ENCODE measurements at regions of chr17 and their contacts with region 1.

Region 1: GRCh38 chr17:57939797-57940196 is 15.4 kb downstream of the CUEDC1 start:
- DNase-seq: no peak
- H3K4me3 ChIP-seq: no peak overlapping the region
- H3K27ac ChIP-seq: no peak overlapping the region
- H3K4me1 ChIP-seq: peaks cover 99% of the 10 kb centered on the region
- H3K27me3 ChIP-seq: no peaks in the 10 kb centered on the region
- CTCF ChIP-seq: no peak
- POLR2A ChIP-seq: no peak

Region 2: DNA sequence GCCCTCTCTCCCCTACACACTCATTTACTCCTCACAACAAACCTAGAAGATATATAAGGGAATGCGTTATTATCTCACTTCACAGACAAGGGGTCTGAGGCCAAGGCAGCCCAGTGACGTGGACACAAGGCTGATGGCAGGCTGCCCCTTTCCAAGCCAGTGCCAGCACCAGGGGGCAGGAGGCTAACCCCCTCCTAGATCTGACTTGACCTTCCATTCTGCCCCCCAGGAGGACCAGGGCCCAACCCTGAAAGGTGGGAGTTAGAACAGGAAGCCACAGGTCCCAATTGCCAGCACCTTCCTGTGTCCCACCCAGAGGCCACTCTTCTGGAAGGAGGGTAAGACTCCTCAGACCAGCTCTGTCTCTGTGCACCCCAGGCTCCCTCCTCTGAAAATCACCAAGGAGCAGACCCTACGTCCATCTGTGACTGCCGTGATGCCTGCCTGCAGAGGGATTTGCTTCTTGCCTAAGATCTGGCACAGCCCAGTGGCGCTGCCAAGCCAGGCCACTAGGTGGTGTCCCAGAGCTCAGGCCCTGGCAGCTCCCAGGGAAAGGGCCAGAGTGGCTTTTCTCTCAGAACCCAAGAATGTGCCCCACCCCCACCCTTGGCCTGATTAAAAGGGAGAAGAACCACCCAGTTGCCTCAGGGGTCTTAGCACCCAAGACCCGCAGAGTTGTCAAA is 47.5 kb before region 1 on chr17:
- intact Hi-C with region 1: loop called (anchors 5 kb)
- DNase-seq: no peak
- H3K4me3 ChIP-seq: no peak overlapping the region
- H3K27ac ChIP-seq: peak overlapping the region; percentile 93
- H3K4me1 ChIP-seq: peaks cover 81% of the 10 kb centered on the region
- H3K27me3 ChIP-seq: no peaks in the 10 kb centered on the region
- CTCF ChIP-seq: peak; percentile 82 to 96 (median 86)
- POLR2A ChIP-seq: no peak

Measured in vagina (tissue), 2 donors.